ENCODE measurements at regions of chr2 and their contacts with region 1.

Region 1: DNA sequence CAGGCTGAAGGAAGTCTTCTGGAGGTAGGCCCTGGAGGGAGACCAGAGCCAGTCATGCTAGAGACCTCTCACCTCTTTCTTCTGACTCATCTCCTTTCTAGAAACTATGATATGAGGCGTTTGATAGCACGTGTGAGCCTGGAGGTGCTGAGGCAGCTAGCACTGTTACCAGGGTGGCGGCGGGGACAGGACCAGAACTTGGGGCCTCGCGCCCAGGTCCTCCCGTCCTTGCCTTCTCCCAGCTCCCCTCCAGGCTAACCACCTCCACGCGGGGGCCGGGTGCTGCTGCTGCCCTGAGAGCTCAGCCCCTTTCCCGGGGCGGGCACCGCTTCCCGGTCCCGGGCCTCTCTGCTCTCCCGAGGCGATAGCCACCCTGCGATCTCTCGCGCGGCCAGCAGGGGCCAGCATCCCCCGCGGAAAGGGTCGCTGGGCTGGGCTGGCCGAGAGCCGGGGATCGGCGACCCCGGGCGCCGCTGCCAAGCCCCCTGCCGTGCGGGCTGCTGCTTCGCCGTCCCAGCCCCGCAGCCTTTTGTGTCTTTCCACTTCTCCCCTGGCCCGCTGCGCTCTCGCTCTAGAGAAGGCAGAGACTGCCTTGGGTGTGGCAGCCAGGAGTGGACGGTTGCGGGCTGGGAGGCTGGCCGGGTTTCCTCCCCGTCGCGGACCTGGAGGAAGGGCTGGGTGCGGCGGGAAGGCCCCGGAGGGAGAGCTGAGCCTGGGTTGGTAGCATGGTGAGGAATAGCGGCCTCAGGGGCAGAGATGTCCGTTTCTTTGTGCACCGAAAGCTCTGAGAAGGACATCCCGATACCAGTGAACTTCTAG is 49.1 kb downstream of the TMEM17 start:
- H3K4me3 ChIP-seq: peak overlapping the region; percentile 59
- H3K27ac ChIP-seq: peak overlapping the region; percentile 42; the same call in 1 of the 2 replicates
- H3K4me1 ChIP-seq: no peaks in the 10 kb centered on the region
- CTCF ChIP-seq: peak; percentile 95

Region 2: GRCh38 chr2:62334440-62335058 is 122.4 kb before region 1 on chr2:
- CTCF ChIA-PET with region 1: no interaction called
- POLR2A ChIA-PET with region 1: no interaction called
- H3K4me3 ChIP-seq: no peak overlapping the region
- H3K27ac ChIP-seq: no peak overlapping the region
- H3K4me1 ChIP-seq: no peaks in the 10 kb centered on the region; the same call in 1 of the 2 replicates
- CTCF ChIP-seq: no peak

Region 3: DNA sequence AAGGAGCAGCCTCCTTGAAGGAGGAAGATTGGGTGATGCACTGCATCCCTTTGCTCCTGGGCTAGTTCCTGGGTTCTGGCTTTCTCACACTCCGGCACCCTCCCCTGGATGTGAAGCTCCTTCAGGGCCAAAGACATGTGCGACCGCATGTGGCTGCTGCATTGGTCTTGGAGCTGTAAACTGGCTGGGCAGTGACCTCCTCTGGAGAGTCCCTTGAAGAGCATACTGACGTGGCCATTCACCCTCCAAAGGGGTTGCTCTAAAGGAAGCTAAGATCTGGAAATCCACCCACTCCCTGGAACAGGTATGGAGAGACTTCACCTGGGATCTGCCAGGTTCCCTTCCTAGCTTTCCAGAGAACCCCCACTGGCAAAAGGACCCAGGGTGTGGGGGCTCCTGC is 13.0 kb before region 1 on chr2:
- CTCF ChIA-PET with region 1: interaction called, 16 read pairs
- POLR2A ChIA-PET with region 1: no interaction called
- H3K4me3 ChIP-seq: no peak overlapping the region
- H3K27ac ChIP-seq: no peak overlapping the region
- H3K4me1 ChIP-seq: no peaks in the 10 kb centered on the region
- CTCF ChIP-seq: no peak

Region 4: GRCh38 chr2:62471816-62472215 is 14.9 kb after region 1 on chr2:
- CTCF ChIA-PET with region 1: interaction called, 10 read pairs
- POLR2A ChIA-PET with region 1: interaction called, 3 read pairs
- H3K4me3 ChIP-seq: no peak overlapping the region
- H3K27ac ChIP-seq: no peak overlapping the region
- H3K4me1 ChIP-seq: no peaks in the 10 kb centered on the region
- CTCF ChIP-seq: no peak

Region 5: GRCh38 chr2:62768615-62769014 is 311.7 kb after region 1 on chr2:
- CTCF ChIA-PET with region 1: interaction called, 84 read pairs
- POLR2A ChIA-PET with region 1: no interaction called
- H3K4me3 ChIP-seq: no peak overlapping the region
- H3K27ac ChIP-seq: no peak overlapping the region
- H3K4me1 ChIP-seq: no peaks in the 10 kb centered on the region
- CTCF ChIP-seq: no peak

Region 6: GRCh38 chr2:62774555-62775366 is 317.8 kb after region 1 on chr2:
- CTCF ChIA-PET with region 1: interaction called, 84 read pairs
- POLR2A ChIA-PET with region 1: interaction called, 4 read pairs
- H3K4me3 ChIP-seq: no peak overlapping the region
- H3K27ac ChIP-seq: no peak overlapping the region
- H3K4me1 ChIP-seq: no peaks in the 10 kb centered on the region
- CTCF ChIP-seq: no peak

Region 7: GRCh38 chr2:63023444-63023843 is 566.5 kb after region 1 on chr2:
- CTCF ChIA-PET with region 1: interaction called, 11 read pairs
- POLR2A ChIA-PET with region 1: no interaction called
- H3K4me3 ChIP-seq: no peak overlapping the region
- H3K27ac ChIP-seq: no peak overlapping the region
- H3K4me1 ChIP-seq: no peaks in the 10 kb centered on the region
- CTCF ChIP-seq: no peak